Activated B cell treated with CpG ODN at 0.5 μM for 24 hours (primary cell): ENCODE measurements at regions of chr18 and their contacts with region 1.

Region 1: GRCh38 chr18:62249478-62250097 is 62.5 kb downstream of the RELCH start:
- DNase-seq: no peak
- ATAC-seq: peak; percentile 67
- H3K4me3 Mint-ChIP-seq: no peak overlapping the region
- H3K27ac Mint-ChIP-seq: no peak overlapping the region
- H3K4me1 Mint-ChIP-seq: no peaks in the 10 kb centered on the region
- H3K27me3 Mint-ChIP-seq: no peaks in the 10 kb centered on the region
- CTCF ChIP-seq: peak; percentile 75

Region 2: DNA sequence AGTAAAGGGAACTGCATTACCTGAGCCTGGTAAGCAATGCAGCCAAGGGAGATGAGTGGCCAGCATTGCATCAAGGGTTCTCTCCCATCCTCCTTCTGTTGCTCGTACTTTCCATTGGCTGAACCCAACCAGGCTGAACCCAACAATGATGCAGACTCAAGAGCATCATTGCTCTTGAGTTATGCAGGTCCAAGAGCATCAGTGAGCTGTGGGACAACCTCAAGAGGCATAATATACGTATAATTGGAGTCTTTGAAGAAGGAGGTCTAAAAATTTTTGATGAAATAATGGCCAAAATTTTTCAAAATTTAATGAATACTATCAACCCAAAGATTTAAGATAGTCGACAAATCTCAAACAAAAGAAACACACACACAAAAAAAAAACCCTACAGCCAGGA is 569.8 kb before region 1 on chr18:
- CTCF ChIA-PET with region 1: no interaction called
- POLR2A ChIA-PET with region 1: no interaction called
- intact Hi-C with region 1: no loop called
- DNase-seq: no peak
- ATAC-seq: no peak
- H3K4me3 Mint-ChIP-seq: no peak overlapping the region
- H3K27ac Mint-ChIP-seq: no peak overlapping the region
- H3K4me1 Mint-ChIP-seq: no peaks in the 10 kb centered on the region
- H3K27me3 Mint-ChIP-seq: peaks cover 2% of the 10 kb centered on the region
- CTCF ChIP-seq: no peak

Region 3: DNA sequence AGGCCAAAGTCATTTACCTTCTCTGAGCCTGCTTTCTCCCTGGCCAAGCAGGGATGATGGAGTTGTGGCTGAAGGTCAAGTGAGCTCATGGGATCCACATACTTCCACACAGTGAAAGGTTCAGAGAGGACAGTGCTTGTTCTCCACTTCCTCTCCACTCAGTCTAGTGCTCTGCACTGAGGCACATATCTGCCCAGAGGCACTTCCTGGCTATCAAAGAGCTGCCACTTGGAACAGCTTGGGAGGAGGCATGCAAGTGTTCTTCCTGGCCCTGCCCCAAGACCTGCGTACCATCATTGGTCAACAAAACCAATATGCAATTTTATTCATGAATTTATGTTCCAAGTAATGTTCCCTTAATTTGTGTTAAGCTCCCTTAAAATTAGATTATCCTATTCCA is 428.7 kb before region 1 on chr18:
- CTCF ChIA-PET with region 1: no interaction called
- POLR2A ChIA-PET with region 1: interaction called, 11 read pairs
- intact Hi-C with region 1: no loop called
- DNase-seq: no peak
- ATAC-seq: no peak
- H3K4me3 Mint-ChIP-seq: no peak overlapping the region
- H3K27ac Mint-ChIP-seq: no peak overlapping the region
- H3K4me1 Mint-ChIP-seq: no peaks in the 10 kb centered on the region
- H3K27me3 Mint-ChIP-seq: peaks cover 3% of the 10 kb centered on the region
- CTCF ChIP-seq: no peak

Region 4: GRCh38 chr18:62264984-62265383 is 15.4 kb after region 1 on chr18:
- CTCF ChIA-PET with region 1: interaction called, 16 read pairs
- POLR2A ChIA-PET with region 1: no interaction called
- intact Hi-C with region 1: loop called (anchors 2 kb)
- DNase-seq: no peak
- ATAC-seq: no peak
- H3K4me3 Mint-ChIP-seq: no peak overlapping the region
- H3K27ac Mint-ChIP-seq: no peak overlapping the region
- H3K4me1 Mint-ChIP-seq: peaks cover 3% of the 10 kb centered on the region
- H3K27me3 Mint-ChIP-seq: no peaks in the 10 kb centered on the region
- CTCF ChIP-seq: no peak

Region 5: GRCh38 chr18:62850619-62851309 is 601.2 kb after region 1 on chr18:
- CTCF ChIA-PET with region 1: no interaction called
- POLR2A ChIA-PET with region 1: no interaction called
- intact Hi-C with region 1: no loop called
- DNase-seq: no peak
- ATAC-seq: no peak
- H3K4me3 Mint-ChIP-seq: no peak overlapping the region
- H3K27ac Mint-ChIP-seq: no peak overlapping the region
- H3K4me1 Mint-ChIP-seq: peaks cover 7% of the 10 kb centered on the region
- H3K27me3 Mint-ChIP-seq: no peaks in the 10 kb centered on the region
- CTCF ChIP-seq: no peak